CD4-positive, alpha-beta memory T cell (primary cell): ENCODE measurements at regions of chr7 and their contacts with region 1.

Region 1: GRCh38 chr7:50206453-50207250 is 97.9 kb upstream of the IKZF1 start:
- DNase-seq: peak; percentile 63 to 91 (median 65)
- H3K4me3 ChIP-seq: peak overlapping the region; percentile 4 to 14
- H3K4me3 Mint-ChIP-seq: peak overlapping the region; percentile 73 to 88 (median 81)
- H3K27ac ChIP-seq: peak overlapping the region; percentile 18
- H3K27ac Mint-ChIP-seq: peak overlapping the region; percentile 90 to 97 (median 93)
- H3K4me1 ChIP-seq: peaks cover 79% of the 10 kb centered on the region
- H3K4me1 Mint-ChIP-seq: peaks cover 63 to 88% (median 72%) of the 10 kb centered on the region in 4 donors
- H3K27me3 ChIP-seq: no peaks in the 10 kb centered on the region
- H3K27me3 Mint-ChIP-seq: no peaks in the 10 kb centered on the region

Region 2: GRCh38 chr7:50221028-50221427 is 14.4 kb after region 1 on chr7:
- CTCF ChIA-PET with region 1: interaction called, 27 read pairs
- POLR2A ChIA-PET with region 1: interaction called, 38 read pairs
- intact Hi-C with region 1: no loop called
- DNase-seq: no peak
- H3K4me3 ChIP-seq: no peak overlapping the region
- H3K4me3 Mint-ChIP-seq: no peak overlapping the region
- H3K27ac ChIP-seq: no peak overlapping the region
- H3K27ac Mint-ChIP-seq: no peak overlapping the region
- H3K4me1 ChIP-seq: peaks cover 25% of the 10 kb centered on the region
- H3K4me1 Mint-ChIP-seq: peaks cover 21 to 39% (median 29%) of the 10 kb centered on the region in 4 donors
- H3K27me3 ChIP-seq: no peaks in the 10 kb centered on the region
- H3K27me3 Mint-ChIP-seq: no peaks in the 10 kb centered on the region

Region 3: DNA sequence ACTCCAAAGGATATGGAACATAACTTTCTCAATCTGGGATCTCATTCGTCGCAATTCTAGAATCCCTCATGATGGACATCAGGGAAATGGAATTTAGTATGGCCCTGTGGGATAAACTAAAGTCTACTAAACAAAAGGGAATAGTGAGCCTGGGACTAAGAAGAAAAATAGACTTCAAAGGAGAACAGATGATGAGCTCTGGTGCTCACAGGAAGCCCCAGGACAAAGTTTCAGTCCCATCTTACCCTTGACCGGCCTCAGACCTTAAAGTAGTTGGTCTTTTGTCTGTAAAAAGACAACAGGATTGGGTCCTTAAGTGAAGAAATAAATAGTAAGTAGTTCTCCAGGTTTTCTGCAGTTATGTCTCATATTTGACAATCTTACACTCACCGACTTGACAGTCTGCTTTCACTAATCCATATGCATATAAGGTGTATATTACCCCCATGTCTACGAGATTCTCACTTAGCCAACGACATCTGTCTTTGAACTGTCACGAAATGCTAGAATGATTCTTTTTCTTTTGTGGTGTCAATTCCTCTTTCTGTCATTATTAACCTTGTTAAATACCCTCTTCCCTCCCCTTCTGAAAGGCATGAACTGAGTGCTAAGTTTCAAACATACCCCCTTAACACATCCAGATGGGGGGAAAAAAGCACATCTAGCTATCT is 87.0 kb after region 1 on chr7:
- CTCF ChIA-PET with region 1: interaction called, 19 read pairs
- POLR2A ChIA-PET with region 1: interaction called, 675 read pairs
- intact Hi-C with region 1: no loop called
- DNase-seq: no peak
- H3K4me3 ChIP-seq: no peak overlapping the region
- H3K4me3 Mint-ChIP-seq: no peak overlapping the region
- H3K27ac ChIP-seq: no peak overlapping the region
- H3K27ac Mint-ChIP-seq: no peak overlapping the region
- H3K4me1 ChIP-seq: peaks cover 3% of the 10 kb centered on the region
- H3K4me1 Mint-ChIP-seq: peaks cover 18 to 44% (median 29%) of the 10 kb centered on the region in 4 donors
- H3K27me3 ChIP-seq: no peaks in the 10 kb centered on the region
- H3K27me3 Mint-ChIP-seq: no peaks in the 10 kb centered on the region

Region 4: GRCh38 chr7:50335795-50336754 is 129.4 kb after region 1 on chr7:
- CTCF ChIA-PET with region 1: interaction called, 51 read pairs
- POLR2A ChIA-PET with region 1: interaction called, 29 read pairs
- intact Hi-C with region 1: loop called (anchors 1 kb)
- DNase-seq: peak; percentile 66 to 95 (median 70)
- H3K4me3 ChIP-seq: peak overlapping the region in 1 of 2 donors; percentile 23
- H3K4me3 Mint-ChIP-seq: peak overlapping the region in 1 of 8 donors; percentile 53
- H3K27ac ChIP-seq: peak overlapping the region; percentile 96
- H3K27ac Mint-ChIP-seq: no peak overlapping the region
- H3K4me1 ChIP-seq: peaks cover 100% of the 10 kb centered on the region
- H3K4me1 Mint-ChIP-seq: peaks cover 0 to 63% (median 39%) of the 10 kb centered on the region in 4 donors
- H3K27me3 ChIP-seq: no peaks in the 10 kb centered on the region
- H3K27me3 Mint-ChIP-seq: no peaks in the 10 kb centered on the region

Region 5: GRCh38 chr7:50369143-50370026 is 162.7 kb after region 1 on chr7:
- CTCF ChIA-PET with region 1: interaction called, 424 read pairs
- POLR2A ChIA-PET with region 1: interaction called, 151 read pairs
- intact Hi-C with region 1: loop called (anchors 1 kb)
- DNase-seq: peak; percentile 70 to 81 (median 79)
- H3K4me3 ChIP-seq: no peak overlapping the region
- H3K4me3 Mint-ChIP-seq: peak overlapping the region; percentile 44 to 84 (median 67)
- H3K27ac ChIP-seq: peak overlapping the region; percentile 57
- H3K27ac Mint-ChIP-seq: peak overlapping the region in 6 of 7 donors; percentile 76 to 98 (median 92)
- H3K4me1 ChIP-seq: peaks cover 100% of the 10 kb centered on the region
- H3K4me1 Mint-ChIP-seq: peaks cover 78 to 97% (median 93%) of the 10 kb centered on the region in 4 donors
- H3K27me3 ChIP-seq: no peaks in the 10 kb centered on the region
- H3K27me3 Mint-ChIP-seq: no peaks in the 10 kb centered on the region

Region 6: DNA sequence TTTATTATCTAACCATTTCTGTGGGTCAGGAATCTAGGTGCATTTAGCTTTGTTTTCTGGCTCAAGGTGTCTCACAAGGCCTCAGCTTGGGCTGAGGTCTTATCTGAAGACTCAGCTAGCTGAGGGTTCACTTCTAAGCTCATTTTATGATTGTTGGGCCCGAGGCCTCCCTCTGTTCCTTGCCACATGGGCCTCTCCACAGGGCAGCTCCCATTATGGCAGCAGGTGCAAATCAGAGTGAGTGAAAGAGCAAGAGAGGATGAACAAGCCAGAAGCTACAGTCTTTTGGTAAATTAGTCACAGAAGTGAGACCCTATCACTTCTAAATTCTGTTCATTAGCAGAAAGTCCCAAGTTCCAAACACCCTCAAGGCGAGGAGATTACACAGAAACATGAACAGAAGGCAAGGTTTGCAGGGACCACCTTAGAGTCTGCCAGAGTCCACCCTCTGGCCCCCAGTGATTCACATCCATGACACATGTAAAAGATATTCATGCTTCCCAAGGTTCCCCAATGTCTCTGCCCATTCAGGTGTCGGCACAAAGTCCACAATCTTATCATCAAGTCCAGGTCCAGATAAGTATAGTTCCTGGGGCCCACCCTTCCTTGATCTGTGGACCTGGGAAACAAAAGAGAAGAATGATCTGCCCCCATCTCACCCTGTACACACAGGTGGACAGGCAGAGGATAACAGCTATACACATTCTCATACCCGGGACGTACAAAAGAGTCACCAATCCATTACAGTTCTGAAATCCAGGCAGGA is 219.8 kb after region 1 on chr7:
- CTCF ChIA-PET with region 1: interaction called, 205 read pairs
- POLR2A ChIA-PET with region 1: interaction called, 9 read pairs
- intact Hi-C with region 1: no loop called
- DNase-seq: no peak
- H3K4me3 ChIP-seq: no peak overlapping the region
- H3K4me3 Mint-ChIP-seq: no peak overlapping the region
- H3K27ac ChIP-seq: no peak overlapping the region
- H3K27ac Mint-ChIP-seq: peak overlapping the region in 1 of 7 donors; percentile 63
- H3K4me1 ChIP-seq: no peaks in the 10 kb centered on the region
- H3K4me1 Mint-ChIP-seq: no peaks in the 10 kb centered on the region
- H3K27me3 ChIP-seq: no peaks in the 10 kb centered on the region
- H3K27me3 Mint-ChIP-seq: no peaks in the 10 kb centered on the region